IMR-90 (cell line): ENCODE measurements at regions of chr6 and their contacts with region 1.

Region 1: DNA sequence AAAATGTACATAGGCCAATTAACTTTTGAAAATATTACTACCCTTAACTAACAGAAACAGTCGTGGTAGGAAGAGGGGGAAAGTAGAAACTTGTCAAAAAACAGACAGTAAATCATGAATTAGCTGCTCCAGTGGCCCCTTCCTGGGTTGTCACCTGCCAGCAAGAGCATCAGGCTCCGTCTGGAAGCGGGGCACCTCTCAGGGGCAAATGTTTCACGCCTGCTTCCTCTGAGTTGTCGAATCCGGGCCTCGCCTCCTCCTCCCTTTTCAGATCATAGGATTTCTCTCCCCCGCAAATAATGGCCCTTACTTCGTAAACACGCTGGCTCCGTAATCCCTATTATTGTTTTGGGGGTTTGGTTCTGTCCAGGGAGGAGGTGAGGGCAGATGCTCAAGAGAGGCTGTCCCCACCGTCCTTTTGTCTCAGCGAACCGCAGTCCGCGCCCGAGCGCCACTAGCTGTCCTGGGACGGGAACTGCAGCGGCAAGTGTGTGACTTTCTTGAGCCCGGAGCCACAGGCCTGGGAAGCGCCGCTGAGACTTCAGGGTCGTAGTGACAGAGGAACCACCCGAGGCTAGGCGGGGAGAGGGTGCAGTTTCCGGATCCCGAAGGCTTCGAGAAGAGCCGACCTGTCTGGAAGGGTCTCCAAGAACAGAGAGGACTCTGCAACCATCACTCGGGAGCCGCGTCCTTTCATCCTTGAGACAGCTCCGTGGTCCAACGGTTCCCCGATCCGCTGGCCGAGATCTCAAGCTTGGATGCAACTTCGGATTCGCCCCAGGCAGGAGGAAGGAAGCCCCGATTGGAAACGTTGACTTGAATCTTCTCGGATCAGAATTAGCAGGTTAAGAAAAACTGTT is 214.5 kb upstream of the ZNF184 start:
- DNase-seq: peak; percentile 62
- ATAC-seq: peak; percentile 85
- H3K4me3 ChIP-seq: peak overlapping the region; percentile 55
- H3K27ac ChIP-seq: no peak overlapping the region
- H3K4me1 ChIP-seq: no peaks in the 10 kb centered on the region
- H3K27me3 ChIP-seq: no peaks in the 10 kb centered on the region
- CTCF ChIP-seq: peak; percentile 63
- POLR2A ChIP-seq: no peak
- RAD21 ChIP-seq: peak; percentile 54

Region 2: GRCh38 chr6:27472617-27473400 is 214.6 kb before region 1 on chr6 and contains the start of gene ZNF184:
- CTCF ChIA-PET with region 1: no interaction called
- POLR2A ChIA-PET with region 1: no interaction called
- dilution Hi-C with region 1: no loop called
- in situ Hi-C with region 1: no loop called
- intact Hi-C with region 1: loop called (anchors 10 kb)
- DNase-seq: peak; percentile 98
- ATAC-seq: peak; percentile 96
- H3K4me3 ChIP-seq: peak within 1 kb of the TSS; percentile 60
- H3K27ac ChIP-seq: peak within 1 kb of the TSS; percentile 74
- H3K4me1 ChIP-seq: no peaks in the 10 kb centered on the region
- H3K27me3 ChIP-seq: no peaks in the 10 kb centered on the region
- CTCF ChIP-seq: no peak; the same call in 1 of the 2 replicates
- POLR2A ChIP-seq: peak; percentile 82
- RAD21 ChIP-seq: no peak
- total RNA-seq, gene ZNF184: 8.1 and 10.6 TPM in 2 replicates

Region 3: DNA sequence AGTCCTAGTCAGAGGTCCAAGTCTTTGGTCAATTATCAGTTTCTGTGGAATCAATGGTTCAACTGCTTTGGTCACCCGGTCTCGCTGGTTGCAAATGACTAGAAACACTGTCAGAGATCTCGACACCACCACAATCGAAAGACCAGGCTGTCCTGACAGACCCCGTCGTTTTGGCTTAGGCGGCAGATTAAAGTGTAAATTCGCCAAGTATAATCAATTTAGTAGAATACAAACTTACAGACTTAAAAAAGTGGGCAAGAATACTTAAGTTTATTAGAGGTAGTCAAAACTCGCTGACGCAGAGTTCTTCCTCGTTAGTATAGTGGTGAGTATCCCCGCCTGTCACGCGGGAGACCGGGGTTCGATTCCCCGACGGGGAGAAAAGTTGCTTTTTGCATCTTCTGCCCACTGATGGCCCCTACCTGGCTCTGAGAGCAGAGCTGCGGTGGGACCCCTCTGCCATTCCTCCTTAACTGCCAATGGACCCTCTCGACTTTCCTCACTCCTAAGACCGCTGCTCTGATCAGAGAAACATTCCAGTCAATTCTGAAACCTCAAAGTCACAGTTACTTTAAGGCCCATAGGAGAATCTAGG is 183.9 kb before region 1 on chr6:
- CTCF ChIA-PET with region 1: no interaction called
- POLR2A ChIA-PET with region 1: no interaction called
- dilution Hi-C with region 1: no loop called
- in situ Hi-C with region 1: no loop called
- intact Hi-C with region 1: loop called (anchors 5 kb)
- DNase-seq: peak; percentile 78
- ATAC-seq: peak; percentile 53
- H3K4me3 ChIP-seq: peak overlapping the region; percentile 74
- H3K27ac ChIP-seq: no peak overlapping the region
- H3K4me1 ChIP-seq: no peaks in the 10 kb centered on the region
- H3K27me3 ChIP-seq: no peaks in the 10 kb centered on the region
- CTCF ChIP-seq: no peak
- POLR2A ChIP-seq: no peak
- RAD21 ChIP-seq: no peak; the same call in 1 of the 2 replicates

Region 4: GRCh38 chr6:27518881-27519795 is 168.2 kb before region 1 on chr6:
- CTCF ChIA-PET with region 1: no interaction called
- POLR2A ChIA-PET with region 1: no interaction called
- dilution Hi-C with region 1: no loop called
- in situ Hi-C with region 1: no loop called
- intact Hi-C with region 1: loop called (anchors 2 kb)
- DNase-seq: peak; percentile 90
- ATAC-seq: peak; percentile 87
- H3K4me3 ChIP-seq: peak overlapping the region; percentile 74
- H3K27ac ChIP-seq: peak overlapping the region; percentile 76
- H3K4me1 ChIP-seq: peaks cover 2% of the 10 kb centered on the region; the same call in 1 of the 2 replicates
- H3K27me3 ChIP-seq: peaks cover 2% of the 10 kb centered on the region
- CTCF ChIP-seq: peak; percentile 72
- POLR2A ChIP-seq: no peak
- RAD21 ChIP-seq: peak; percentile 55

Region 5: DNA sequence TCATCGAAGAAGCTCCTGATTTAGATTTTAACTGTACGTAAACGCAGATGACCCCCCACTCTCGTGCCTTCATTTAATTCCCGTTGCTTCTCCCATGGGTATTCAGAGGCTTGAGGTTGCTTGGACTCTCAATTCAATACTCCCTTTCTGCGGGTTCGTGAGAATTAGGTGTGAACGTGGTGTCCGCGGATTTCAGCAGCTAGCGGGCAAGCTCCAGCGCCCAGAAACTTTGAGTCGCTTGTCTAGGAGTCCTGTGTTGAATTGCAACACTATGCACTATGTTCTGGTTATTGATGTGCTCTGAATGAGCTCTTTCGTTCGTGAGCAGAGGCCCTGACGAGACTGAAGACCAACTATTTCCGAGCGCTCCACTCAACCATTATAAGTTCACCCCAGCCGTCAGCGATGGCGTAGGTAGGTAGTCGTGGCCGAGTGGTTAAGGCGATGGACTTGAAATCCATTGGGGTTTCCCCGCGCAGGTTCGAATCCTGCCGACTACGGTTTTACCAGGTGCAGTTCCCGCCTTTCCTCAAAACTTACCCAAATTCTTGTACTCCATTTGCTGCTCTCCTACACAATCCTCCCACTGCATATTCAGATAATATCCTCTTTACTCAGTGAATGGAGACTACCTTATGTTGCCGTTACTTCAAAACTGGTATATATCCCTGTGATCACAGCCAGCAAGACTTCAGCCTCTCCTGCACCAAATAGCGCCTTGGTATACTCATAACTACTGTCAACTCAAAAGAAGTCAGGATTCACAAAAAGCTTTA is 141.9 kb before region 1 on chr6:
- CTCF ChIA-PET with region 1: no interaction called
- POLR2A ChIA-PET with region 1: no interaction called
- dilution Hi-C with region 1: no loop called
- in situ Hi-C with region 1: no loop called
- intact Hi-C with region 1: loop called (anchors 5 kb)
- DNase-seq: peak; percentile 76
- ATAC-seq: peak; percentile 84
- H3K4me3 ChIP-seq: peak overlapping the region; percentile 50
- H3K27ac ChIP-seq: no peak overlapping the region
- H3K4me1 ChIP-seq: no peaks in the 10 kb centered on the region
- H3K27me3 ChIP-seq: no peaks in the 10 kb centered on the region
- CTCF ChIP-seq: no peak
- POLR2A ChIP-seq: no peak
- RAD21 ChIP-seq: no peak

Region 6: DNA sequence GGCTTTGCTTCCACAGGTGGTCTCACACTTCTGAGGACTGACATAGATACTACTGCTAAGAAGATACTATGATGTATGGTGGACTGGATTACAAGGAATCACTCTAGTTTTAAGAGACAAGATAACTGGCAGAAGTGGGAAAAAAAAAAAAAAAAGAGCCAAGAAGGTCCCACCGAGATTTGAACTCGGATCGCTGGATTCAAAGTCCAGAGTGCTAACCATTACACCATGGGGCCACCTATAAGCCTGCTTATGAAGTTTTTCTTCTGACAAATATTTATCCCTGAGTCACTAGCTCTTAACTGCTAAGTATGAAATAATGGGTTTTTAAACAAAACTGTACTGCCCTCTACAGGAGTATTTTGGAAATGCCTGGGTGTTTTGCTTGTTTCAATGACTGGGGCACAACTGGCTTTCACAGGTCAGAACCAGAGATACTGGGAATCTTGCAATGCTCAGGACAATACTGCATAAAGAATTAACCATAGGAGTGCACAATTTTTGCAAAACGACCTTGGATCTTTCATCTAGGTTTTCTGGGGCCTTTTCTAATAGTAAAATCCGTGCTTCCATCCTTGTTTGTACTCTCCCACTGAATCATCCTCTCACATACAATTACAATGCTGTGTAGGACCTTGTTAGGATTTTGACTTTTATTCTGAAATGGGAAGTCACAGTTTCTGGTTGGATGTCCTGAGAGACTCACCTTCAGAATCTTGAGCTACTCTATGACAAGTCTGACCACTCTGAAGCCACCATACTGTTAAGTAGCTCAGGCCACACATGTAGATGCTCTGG is 108.5 kb after region 1 on chr6:
- CTCF ChIA-PET with region 1: interaction called, 3 read pairs
- POLR2A ChIA-PET with region 1: no interaction called
- dilution Hi-C with region 1: no loop called
- in situ Hi-C with region 1: no loop called
- intact Hi-C with region 1: loop called (anchors 2 kb)
- DNase-seq: peak; percentile 89
- ATAC-seq: peak; percentile 63
- H3K4me3 ChIP-seq: no peak overlapping the region
- H3K27ac ChIP-seq: no peak overlapping the region
- H3K4me1 ChIP-seq: no peaks in the 10 kb centered on the region
- H3K27me3 ChIP-seq: no peaks in the 10 kb centered on the region
- CTCF ChIP-seq: peak; percentile 84
- POLR2A ChIP-seq: no peak
- RAD21 ChIP-seq: peak; percentile 55

Region 7: GRCh38 chr6:27902335-27903314 is 215.2 kb after region 1 on chr6:
- CTCF ChIA-PET with region 1: no interaction called
- POLR2A ChIA-PET with region 1: no interaction called
- dilution Hi-C with region 1: no loop called
- in situ Hi-C with region 1: no loop called
- intact Hi-C with region 1: loop called (anchors 2 kb)
- DNase-seq: peak; percentile 78
- ATAC-seq: peak; percentile 94
- H3K4me3 ChIP-seq: peak overlapping the region; percentile 66
- H3K27ac ChIP-seq: no peak overlapping the region
- H3K4me1 ChIP-seq: no peaks in the 10 kb centered on the region
- H3K27me3 ChIP-seq: no peaks in the 10 kb centered on the region
- CTCF ChIP-seq: no peak
- POLR2A ChIP-seq: no peak
- RAD21 ChIP-seq: no peak